ENCODE measurements at regions of chrX and their contacts with region 1.

Region 1: GRCh38 chrX:45524296-45524695 is 323.6 kb upstream of the DIPK2B start:
- DNase-seq: no peak
- ATAC-seq: no peak
- H3K4me3 ChIP-seq: no peak overlapping the region
- H3K27ac ChIP-seq: no peak overlapping the region
- H3K4me1 ChIP-seq: peaks cover 0 to 5% (median 0%) of the 10 kb centered on the region in 12 donors
- H3K27me3 ChIP-seq: peaks cover 0 to 12% (median 0%) of the 10 kb centered on the region in 9 donors
- CTCF ChIP-seq: no peak
- POLR2A ChIP-seq: no peak

Region 2: GRCh38 chrX:45571453-45571852 is 47.2 kb after region 1 on chrX:
- intact Hi-C with region 1: no loop called
- DNase-seq: no peak
- ATAC-seq: no peak
- H3K4me3 ChIP-seq: no peak overlapping the region
- H3K27ac ChIP-seq: no peak overlapping the region
- H3K4me1 ChIP-seq: no peaks in the 10 kb centered on the region
- H3K27me3 ChIP-seq: no peaks in the 10 kb centered on the region
- CTCF ChIP-seq: no peak
- POLR2A ChIP-seq: no peak

Region 3: DNA sequence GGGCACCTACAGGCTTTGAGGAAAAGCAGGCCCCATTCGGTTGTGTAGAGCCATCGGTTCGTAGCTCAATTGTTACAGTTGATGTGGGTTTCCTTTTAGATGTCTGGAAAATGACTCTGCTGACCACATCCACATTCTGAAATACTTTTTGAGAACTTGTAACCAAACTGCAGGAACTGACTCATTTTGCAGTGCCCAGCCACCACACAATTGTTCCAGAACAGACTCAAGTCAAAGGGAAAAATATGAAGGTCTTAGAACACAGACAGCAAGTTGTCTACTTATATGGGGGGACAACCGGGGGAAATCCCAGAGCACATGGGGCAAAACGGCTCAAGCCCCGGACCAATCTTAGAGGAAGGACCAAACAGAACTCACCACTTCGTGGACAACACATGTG is 234.0 kb after region 1 on chrX:
- intact Hi-C with region 1: loop called in 2 of 10 experiments (anchors 10 kb)
- DNase-seq: no peak
- ATAC-seq: peak in 3 of 4 donors; percentile 42 to 57 (median 49)
- H3K4me3 ChIP-seq: peak overlapping the region in 1 of 12 donors; percentile 34
- H3K27ac ChIP-seq: peak overlapping the region in 8 of 12 donors; percentile 1 to 88 (median 26)
- H3K4me1 ChIP-seq: peaks cover 0 to 85% (median 0%) of the 10 kb centered on the region in 12 donors
- H3K27me3 ChIP-seq: peaks cover 0 to 15% (median 0%) of the 10 kb centered on the region in 9 donors
- CTCF ChIP-seq: no peak
- POLR2A ChIP-seq: no peak

Measured in heart left ventricle (tissue), 16 donors.